SK-N-SH (cell line): ENCODE measurements at regions of chr9 and their contacts with region 1.

Region 1: DNA sequence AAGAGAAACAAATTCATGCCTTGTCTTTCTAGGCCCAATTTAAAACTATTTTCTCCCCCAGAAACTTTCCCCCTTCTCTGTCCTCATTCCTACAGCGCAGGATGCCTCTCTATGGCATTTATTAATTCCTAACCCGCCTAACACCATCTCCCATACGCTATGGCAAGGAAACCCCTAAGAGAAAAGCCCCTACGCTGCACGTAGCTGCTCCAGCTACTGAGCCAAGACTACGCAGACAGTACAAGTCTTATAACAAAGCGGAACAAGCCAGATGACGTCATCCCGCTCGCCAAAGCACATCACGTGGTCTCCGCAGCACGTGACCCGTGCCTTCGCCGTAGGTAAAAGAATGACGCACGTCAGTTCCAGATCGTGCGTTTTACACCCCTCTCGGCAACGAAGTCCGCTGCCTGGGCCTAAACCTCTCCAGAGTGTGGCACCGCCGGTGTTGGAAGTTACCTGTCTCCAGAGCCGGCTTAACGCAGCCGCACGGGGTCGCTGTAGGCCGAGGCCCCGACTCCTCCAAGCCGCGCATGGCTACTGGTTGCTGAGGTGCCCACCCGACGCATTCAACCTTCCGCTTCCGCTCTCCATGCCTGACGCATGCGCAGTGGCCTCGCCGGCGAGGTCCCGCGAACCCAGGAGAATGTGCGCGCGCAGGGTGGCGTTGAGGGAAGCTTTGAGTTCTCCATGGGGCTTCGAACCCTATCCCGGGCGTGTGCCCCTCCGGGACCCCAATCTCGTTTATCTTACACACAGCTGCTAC is at the start of gene TRMO:
- DNase-seq: peak; percentile 93
- H3K4me3 ChIP-seq: peak within 1 kb of the TSS; percentile 72 to 74
- H3K27ac ChIP-seq: peak within 1 kb of the TSS; percentile 94 to 99
- H3K4me1 ChIP-seq: peaks cover 0 to 3% of the 10 kb centered on the region in 2 experiments; a peak in 3 of 4 replicates
- H3K27me3 ChIP-seq: no peaks in the 10 kb centered on the region
- CTCF ChIP-seq: peak; percentile 77
- EP300 ChIP-seq: peak in 1 of 2 experiments; percentile 24; a peak in 2 of 4 replicates
- RAD21 ChIP-seq: no peak; the same call in 1 of the 2 replicates
- polyA plus RNA-seq, gene TRMO: 8.1 and 11.8 TPM in 2 replicates

Region 2: GRCh38 chr9:97943308-97943855 is 21.2 kb after region 1 on chr9:
- CTCF ChIA-PET with region 1: interaction called, 27 read pairs
- POLR2A ChIA-PET with region 1: no interaction called
- DNase-seq: no peak
- H3K4me3 ChIP-seq: no peak overlapping the region
- H3K27ac ChIP-seq: no peak overlapping the region
- H3K4me1 ChIP-seq: no peaks in the 10 kb centered on the region
- H3K27me3 ChIP-seq: peaks cover 8% of the 10 kb centered on the region; the same call in 1 of the 2 replicates
- CTCF ChIP-seq: no peak
- EP300 ChIP-seq: no peak
- RAD21 ChIP-seq: no peak

Region 3: DNA sequence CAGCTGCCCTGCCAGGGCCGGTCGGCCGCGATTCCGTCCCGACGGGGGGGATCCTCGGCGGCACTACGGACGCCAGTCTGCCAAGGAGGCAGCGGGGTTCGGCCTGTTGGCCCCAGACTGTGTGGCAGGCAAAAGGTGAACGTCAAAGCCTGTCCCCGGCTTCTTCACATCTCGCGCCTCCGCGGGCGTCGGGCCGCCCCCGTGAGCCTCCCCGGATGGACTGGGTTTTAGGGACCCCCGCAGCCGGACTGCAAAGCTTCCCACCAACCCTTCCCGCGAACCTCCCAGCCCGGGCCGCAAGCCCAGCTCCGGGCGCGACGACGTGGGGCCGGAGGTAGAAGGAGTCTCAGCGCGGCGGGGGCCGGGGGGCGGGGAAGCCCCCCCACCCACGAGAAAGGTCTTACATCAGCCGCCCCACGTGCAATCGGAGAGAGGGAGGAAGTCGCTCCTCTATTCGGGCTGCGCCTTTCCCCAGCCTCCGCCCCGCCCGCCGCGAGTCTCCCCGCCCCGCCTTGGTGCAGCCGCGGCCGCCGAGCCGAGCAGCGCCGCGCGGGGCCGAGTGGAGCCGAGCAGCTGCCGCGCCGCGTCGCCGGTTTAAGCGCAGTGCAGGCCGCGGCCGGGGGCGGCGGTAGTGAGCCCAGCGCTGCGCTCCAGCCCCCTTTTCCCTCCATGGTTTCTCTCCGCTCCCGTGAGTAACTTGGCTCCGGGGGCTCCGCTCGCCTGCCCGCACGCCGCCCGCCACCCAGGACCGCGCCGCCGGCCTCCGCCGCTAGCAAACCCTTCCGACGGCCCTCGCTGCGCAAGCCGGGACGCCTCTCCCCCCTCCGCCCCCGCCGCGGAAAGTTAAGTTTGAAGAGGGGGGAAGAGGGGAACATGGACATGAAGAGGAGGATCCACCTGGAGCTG is 60.8 kb after region 1 on chr9 and contains the start of gene ANP32B:
- CTCF ChIA-PET with region 1: interaction called, 90 read pairs
- POLR2A ChIA-PET with region 1: interaction called, 16 read pairs
- DNase-seq: peak; percentile 92
- H3K4me3 ChIP-seq: peak within 1 kb of the TSS; percentile 91 to 98
- H3K27ac ChIP-seq: peak within 1 kb of the TSS; percentile 89 to 96
- H3K4me1 ChIP-seq: peaks cover 4 to 32% of the 10 kb centered on the region in 2 experiments; a peak in 2 of 4 replicates
- H3K27me3 ChIP-seq: no peaks in the 10 kb centered on the region
- CTCF ChIP-seq: peak; percentile 65
- EP300 ChIP-seq: no peak
- RAD21 ChIP-seq: peak; percentile 31
- polyA plus RNA-seq, gene ANP32B: 21.6 and 28.4 TPM in 2 replicates

Region 4: GRCh38 chr9:98034593-98035546 is 112.7 kb after region 1 on chr9:
- CTCF ChIA-PET with region 1: interaction called, 96 read pairs
- POLR2A ChIA-PET with region 1: interaction called, 8 read pairs
- DNase-seq: peak; percentile 79
- H3K4me3 ChIP-seq: no peak overlapping the region
- H3K27ac ChIP-seq: peak overlapping the region in 1 of 2 experiments; percentile 18; a peak in 1 of 4 replicates
- H3K4me1 ChIP-seq: peaks cover 0 to 3% of the 10 kb centered on the region in 2 experiments; a peak in 1 of 4 replicates
- H3K27me3 ChIP-seq: no peaks in the 10 kb centered on the region
- CTCF ChIP-seq: peak; percentile 83
- EP300 ChIP-seq: no peak
- RAD21 ChIP-seq: peak; percentile 64

Region 5: GRCh38 chr9:98255578-98256296 is 333.6 kb after region 1 on chr9 and contains the start of gene TBC1D2:
- CTCF ChIA-PET with region 1: interaction called, 9 read pairs
- POLR2A ChIA-PET with region 1: interaction called, 10 read pairs
- DNase-seq: peak; percentile 98
- H3K4me3 ChIP-seq: peak within 1 kb of the TSS; percentile 81 to 85
- H3K27ac ChIP-seq: peak within 1 kb of the TSS; percentile 92 to 98
- H3K4me1 ChIP-seq: peaks cover 7 to 11% of the 10 kb centered on the region in 2 experiments
- H3K27me3 ChIP-seq: no peaks in the 10 kb centered on the region
- CTCF ChIP-seq: peak; percentile 30; the same call in 1 of the 2 replicates
- EP300 ChIP-seq: no peak
- RAD21 ChIP-seq: no peak
- polyA plus RNA-seq, gene TBC1D2: 5.1 and 5.6 TPM in 2 replicates